Endothelial cell of umbilical vein (primary cell): ENCODE measurements at regions of chr16 and their contacts with region 1.

Region 1: GRCh38 chr16:72400257-72400882 is 228.4 kb upstream of the PMFBP1 start:
- DNase-seq: peak; percentile 76
- H3K4me3 ChIP-seq: no peak overlapping the region
- H3K27ac ChIP-seq: no peak overlapping the region
- H3K4me1 ChIP-seq: no peaks in the 10 kb centered on the region
- H3K27me3 ChIP-seq: no peaks in the 10 kb centered on the region
- CTCF ChIP-seq: peak; percentile 64 to 73
- POLR2A ChIP-seq: no peak

Region 2: DNA sequence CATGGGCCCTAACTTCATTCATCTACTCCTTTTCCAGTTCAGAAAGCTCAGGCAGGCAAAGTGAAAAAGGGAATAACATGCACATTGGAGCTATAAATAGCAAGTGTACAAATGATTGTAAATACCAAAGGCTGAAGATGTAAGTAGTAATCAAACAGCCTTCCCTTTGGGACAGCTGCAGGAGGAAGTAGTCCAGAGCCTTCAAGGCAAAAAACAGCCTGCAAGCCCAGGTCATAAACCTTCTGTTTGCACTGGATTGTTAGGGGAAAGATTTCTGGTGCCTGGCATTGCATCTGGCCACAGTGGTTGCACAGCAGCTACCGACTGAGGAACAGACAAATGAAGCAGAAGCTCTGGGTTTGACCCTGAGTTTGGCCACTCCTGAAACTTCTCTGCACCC is 129.8 kb before region 1 on chr16:
- CTCF ChIA-PET with region 1: interaction called, 10 read pairs
- POLR2A ChIA-PET with region 1: no interaction called
- dilution Hi-C with region 1: no loop called
- intact Hi-C with region 1: no loop called
- DNase-seq: no peak
- H3K4me3 ChIP-seq: no peak overlapping the region
- H3K27ac ChIP-seq: no peak overlapping the region
- H3K4me1 ChIP-seq: no peaks in the 10 kb centered on the region
- H3K27me3 ChIP-seq: no peaks in the 10 kb centered on the region
- CTCF ChIP-seq: no peak
- POLR2A ChIP-seq: no peak

Region 3: DNA sequence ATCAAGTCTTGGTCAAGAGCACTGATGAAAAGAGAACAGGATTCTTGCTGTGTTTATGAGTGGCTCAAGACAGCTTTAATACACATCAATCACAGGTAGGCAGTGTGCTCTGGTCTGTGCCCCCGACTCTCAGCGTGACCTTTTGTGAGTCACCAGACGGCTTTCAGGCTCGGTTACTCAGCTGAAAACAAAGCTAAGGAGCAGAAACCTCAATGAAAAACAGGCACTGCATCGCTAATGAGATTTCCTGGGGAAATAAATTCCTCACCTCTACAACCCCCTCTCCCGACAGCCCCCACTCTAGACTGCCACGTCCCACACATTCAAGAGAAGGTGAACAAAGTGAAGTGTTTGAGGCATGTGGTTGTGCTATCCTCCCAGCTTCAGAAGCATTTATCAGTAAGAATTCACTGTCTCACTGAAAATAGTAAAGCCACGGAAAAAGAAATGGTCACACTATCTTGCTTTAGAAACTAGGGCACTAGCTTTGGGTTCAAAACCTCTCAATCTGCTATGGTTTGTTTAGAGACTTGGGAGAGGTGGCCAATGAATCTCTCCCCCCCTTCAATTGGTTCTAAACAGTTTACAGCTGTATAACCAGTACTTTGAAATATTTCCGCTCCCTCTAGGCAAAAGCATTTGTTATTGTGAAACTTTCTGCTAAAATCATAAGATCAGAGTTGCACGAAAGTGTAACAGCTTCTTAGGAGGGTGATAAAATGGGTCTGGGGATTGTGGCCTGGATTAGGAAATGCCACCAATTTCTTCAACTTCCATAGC is 28.9 kb before region 1 on chr16:
- CTCF ChIA-PET with region 1: interaction called, 25 read pairs
- POLR2A ChIA-PET with region 1: no interaction called
- dilution Hi-C with region 1: no loop called
- intact Hi-C with region 1: no loop called
- DNase-seq: peak; percentile 97
- H3K4me3 ChIP-seq: no peak overlapping the region
- H3K27ac ChIP-seq: peak overlapping the region; percentile 71
- H3K4me1 ChIP-seq: peaks cover 21% of the 10 kb centered on the region
- H3K27me3 ChIP-seq: no peaks in the 10 kb centered on the region
- CTCF ChIP-seq: no peak
- POLR2A ChIP-seq: peak; percentile 33

Region 4: GRCh38 chr16:72388007-72388406 is 12.4 kb before region 1 on chr16:
- CTCF ChIA-PET with region 1: interaction called, 25 read pairs
- POLR2A ChIA-PET with region 1: no interaction called
- dilution Hi-C with region 1: no loop called
- intact Hi-C with region 1: no loop called
- DNase-seq: no peak
- H3K4me3 ChIP-seq: no peak overlapping the region
- H3K27ac ChIP-seq: no peak overlapping the region
- H3K4me1 ChIP-seq: no peaks in the 10 kb centered on the region
- H3K27me3 ChIP-seq: no peaks in the 10 kb centered on the region
- CTCF ChIP-seq: no peak
- POLR2A ChIP-seq: no peak

Region 5: GRCh38 chr16:72467157-72467759 is 66.9 kb after region 1 on chr16:
- CTCF ChIA-PET with region 1: interaction called, 27 read pairs
- POLR2A ChIA-PET with region 1: no interaction called
- dilution Hi-C with region 1: no loop called
- intact Hi-C with region 1: loop called (anchors 1 kb)
- DNase-seq: peak; percentile 72
- H3K4me3 ChIP-seq: no peak overlapping the region
- H3K27ac ChIP-seq: no peak overlapping the region
- H3K4me1 ChIP-seq: peaks cover 7% of the 10 kb centered on the region
- H3K27me3 ChIP-seq: no peaks in the 10 kb centered on the region
- CTCF ChIP-seq: peak; percentile 42 to 53
- POLR2A ChIP-seq: no peak

Region 6: GRCh38 chr16:73878611-73879010 is 1478.2 kb after region 1 on chr16:
- CTCF ChIA-PET with region 1: interaction called, 6 read pairs
- POLR2A ChIA-PET with region 1: no interaction called
- dilution Hi-C with region 1: no loop called
- intact Hi-C with region 1: loop called (anchors 5 kb)
- DNase-seq: peak; percentile 65
- H3K4me3 ChIP-seq: no peak overlapping the region
- H3K27ac ChIP-seq: no peak overlapping the region
- H3K4me1 ChIP-seq: no peaks in the 10 kb centered on the region
- H3K27me3 ChIP-seq: no peaks in the 10 kb centered on the region
- CTCF ChIP-seq: peak in 1 of 2 donors; percentile 34
- POLR2A ChIP-seq: no peak